A549 (cell line): ENCODE measurements at regions of chr1 and their contacts with region 1.

Region 1: GRCh38 chr1:67535474-67535873 is 105.3 kb upstream of the SERBP1 start:
- DNase-seq: peak; percentile 55 to 78
- ATAC-seq: peak; percentile 91 to 92
- H3K4me3 ChIP-seq: no peak overlapping the region
- H3K27ac ChIP-seq: peak overlapping the region; percentile 51 to 54; a peak in 4 of 6 replicates
- H3K4me1 ChIP-seq: peaks cover 16% of the 10 kb centered on the region; the same call in 2 of the 3 replicates
- CTCF ChIP-seq: peak; percentile 78
- EP300 ChIP-seq: no peak
- POLR2A ChIP-seq: no peak
- RAD21 ChIP-seq: peak; percentile 78 to 86

Region 2: GRCh38 chr1:67430352-67431155 is 104.9 kb before region 1 on chr1 and contains the start of gene SERBP1:
- CTCF ChIA-PET with region 1: no interaction called
- POLR2A ChIA-PET with region 1: no interaction called
- DNase-seq: peak; percentile 79 to 97
- ATAC-seq: peak; percentile 94 to 95
- H3K4me3 ChIP-seq: peak within 1 kb of the TSS; percentile 84
- H3K27ac ChIP-seq: peak within 1 kb of the TSS; percentile 92 to 96
- H3K4me1 ChIP-seq: peaks cover 26% of the 10 kb centered on the region
- CTCF ChIP-seq: no peak
- EP300 ChIP-seq: no peak
- POLR2A ChIP-seq: peak; percentile 80
- RAD21 ChIP-seq: no peak
- polyA plus RNA-seq, gene SERBP1: 145 and 333 TPM in 2 replicates

Region 3: DNA sequence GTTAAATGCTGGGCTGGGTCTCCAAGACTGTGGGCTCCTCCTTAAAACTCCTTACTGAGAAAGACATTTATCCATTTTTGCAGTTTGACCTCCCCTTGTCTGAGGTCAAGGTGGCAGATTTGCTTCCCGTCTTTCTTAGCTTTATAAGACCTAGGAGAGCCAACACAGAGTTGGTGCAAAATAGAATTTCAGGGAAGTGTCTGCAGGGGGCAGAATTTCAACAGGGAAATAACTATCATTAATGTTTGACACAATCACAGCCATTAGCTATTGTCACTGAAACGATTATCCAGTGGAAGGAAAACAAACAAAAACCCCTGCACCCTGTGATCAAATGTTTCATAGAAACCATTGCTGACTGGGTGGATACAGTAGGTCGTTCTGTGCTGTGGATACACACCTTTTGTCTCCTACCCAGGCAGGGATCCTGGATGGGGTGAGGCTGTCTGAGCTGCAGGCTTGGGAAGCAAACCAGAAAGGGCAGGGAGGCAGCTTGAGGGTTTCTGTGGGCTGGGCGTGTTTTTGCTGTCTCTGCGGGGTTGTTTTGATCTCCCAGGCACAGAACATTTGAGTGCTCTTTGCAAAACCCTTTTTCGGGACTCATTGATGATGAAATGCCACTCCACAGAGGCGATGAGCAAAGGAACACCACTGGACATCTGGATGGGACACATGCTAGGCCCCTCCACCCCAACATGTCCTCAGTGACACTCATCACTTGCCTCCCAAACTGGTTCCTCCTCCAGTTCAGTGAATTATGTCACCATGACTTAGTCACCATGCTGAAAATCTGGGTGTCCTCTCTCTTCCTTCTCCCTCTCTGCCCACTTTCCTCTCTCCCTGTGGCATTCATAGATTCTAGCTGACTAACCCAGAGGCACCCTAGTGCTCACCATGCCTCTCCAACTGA is 11.1 kb before region 1 on chr1:
- CTCF ChIA-PET with region 1: interaction called, 13 read pairs
- POLR2A ChIA-PET with region 1: no interaction called
- DNase-seq: no peak
- ATAC-seq: peak in 1 of 2 experiments; percentile 33; a peak in 2 of 6 replicates
- H3K4me3 ChIP-seq: no peak overlapping the region
- H3K27ac ChIP-seq: no peak overlapping the region
- H3K4me1 ChIP-seq: no peaks in the 10 kb centered on the region; the same call in 2 of the 3 replicates
- CTCF ChIP-seq: no peak
- EP300 ChIP-seq: no peak
- POLR2A ChIP-seq: no peak
- RAD21 ChIP-seq: no peak

Region 4: GRCh38 chr1:67662884-67663283 is 127.4 kb after region 1 on chr1:
- CTCF ChIA-PET with region 1: no interaction called
- POLR2A ChIA-PET with region 1: no interaction called
- DNase-seq: no peak
- ATAC-seq: no peak
- H3K4me3 ChIP-seq: no peak overlapping the region
- H3K27ac ChIP-seq: no peak overlapping the region; a peak in 1 of 6 replicates
- H3K4me1 ChIP-seq: peaks cover 13% of the 10 kb centered on the region; the same call in 1 of the 3 replicates
- CTCF ChIP-seq: no peak
- EP300 ChIP-seq: no peak
- POLR2A ChIP-seq: no peak
- RAD21 ChIP-seq: no peak

Region 5: DNA sequence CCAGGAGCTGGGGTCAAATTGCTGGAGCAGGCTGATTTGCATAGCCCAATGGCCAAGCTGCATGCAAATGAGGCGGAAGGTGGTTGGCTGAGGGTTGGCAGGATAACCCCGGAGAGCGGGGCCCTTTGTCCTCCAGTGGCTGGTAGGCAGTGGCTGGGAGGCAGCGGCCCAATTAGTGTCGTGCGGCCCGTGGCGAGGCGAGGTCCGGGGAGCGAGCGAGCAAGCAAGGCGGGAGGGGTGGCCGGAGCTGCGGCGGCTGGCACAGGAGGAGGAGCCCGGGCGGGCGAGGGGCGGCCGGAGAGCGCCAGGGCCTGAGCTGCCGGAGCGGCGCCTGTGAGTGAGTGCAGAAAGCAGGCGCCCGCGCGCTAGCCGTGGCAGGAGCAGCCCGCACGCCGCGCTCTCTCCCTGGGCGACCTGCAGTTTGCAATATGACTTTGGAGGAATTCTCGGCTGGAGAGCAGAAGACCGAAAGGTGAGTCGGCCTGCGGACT is 149.6 kb after region 1 on chr1 and contains the start of gene GADD45A:
- CTCF ChIA-PET with region 1: interaction called, 6 read pairs
- POLR2A ChIA-PET with region 1: interaction called, 13 read pairs
- DNase-seq: peak; percentile 94 to 97
- ATAC-seq: peak; percentile 87 to 95
- H3K4me3 ChIP-seq: peak within 1 kb of the TSS; percentile 80
- H3K27ac ChIP-seq: peak within 1 kb of the TSS; percentile 96 to 99
- H3K4me1 ChIP-seq: peaks cover 43% of the 10 kb centered on the region
- CTCF ChIP-seq: no peak
- EP300 ChIP-seq: no peak
- POLR2A ChIP-seq: peak; percentile 99
- RAD21 ChIP-seq: peak in 1 of 2 experiments; percentile 28; a peak in 1 of 5 replicates
- polyA plus RNA-seq, gene GADD45A: 26.6 and 44.7 TPM in 2 replicates

Region 6: DNA sequence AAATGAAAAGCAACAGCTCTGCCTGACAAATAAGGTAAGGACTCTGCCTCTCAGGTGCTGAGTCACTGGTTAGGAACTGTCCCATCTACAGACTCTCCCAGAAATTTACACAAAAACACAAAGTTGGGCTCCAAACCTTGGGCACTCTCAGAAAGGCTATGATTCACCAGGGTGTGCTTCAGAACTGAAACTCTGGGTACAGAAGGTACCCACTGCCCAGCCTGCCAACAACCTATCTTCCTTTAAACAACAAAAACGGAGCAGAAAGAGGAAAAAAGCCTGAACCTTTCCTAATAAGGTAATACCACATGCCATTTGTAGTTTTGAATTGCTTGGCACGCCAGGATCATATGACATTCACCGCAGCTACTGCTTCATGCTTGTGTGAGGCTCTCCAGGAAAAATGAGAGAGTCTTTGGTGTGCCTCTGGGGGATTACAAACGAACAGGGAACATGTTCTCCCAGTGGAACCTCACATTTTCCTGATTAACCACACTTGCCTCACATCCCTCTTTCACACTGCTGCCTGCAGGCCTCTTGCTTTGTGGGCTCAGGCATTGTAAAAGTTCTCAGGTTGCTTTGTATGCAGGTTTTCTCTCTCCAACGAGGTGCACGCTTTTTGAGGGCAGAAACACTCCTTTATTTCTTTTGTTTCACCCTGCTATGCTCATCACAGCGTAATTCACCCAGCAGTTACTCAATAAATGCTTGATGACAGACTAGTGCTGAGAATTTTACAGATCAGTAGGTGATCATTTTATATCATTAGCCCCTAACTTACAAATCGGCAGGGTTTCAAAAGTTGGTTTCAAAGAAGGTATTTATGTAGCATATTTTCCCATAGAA is 214.6 kb after region 1 on chr1:
- CTCF ChIA-PET with region 1: interaction called, 197 read pairs
- POLR2A ChIA-PET with region 1: no interaction called
- DNase-seq: peak in 1 of 2 experiments; percentile 65
- ATAC-seq: peak; percentile 79
- H3K4me3 ChIP-seq: peak overlapping the region; percentile 35; the same call in 1 of the 3 replicates
- H3K27ac ChIP-seq: peak overlapping the region; percentile 89 to 94
- H3K4me1 ChIP-seq: peaks cover 79% of the 10 kb centered on the region
- CTCF ChIP-seq: no peak
- EP300 ChIP-seq: no peak
- POLR2A ChIP-seq: no peak
- RAD21 ChIP-seq: no peak